ENCODE measurements at regions of chr2 and their contacts with region 1.

Region 1: GRCh38 chr2:16869711-16870110 is 204.1 kb upstream of the CYRIA start:
- DNase-seq: no peak
- H3K4me3 ChIP-seq: no peak overlapping the region
- H3K27ac ChIP-seq: no peak overlapping the region
- H3K4me1 ChIP-seq: no peaks in the 10 kb centered on the region
- CTCF ChIP-seq: no peak

Region 2: DNA sequence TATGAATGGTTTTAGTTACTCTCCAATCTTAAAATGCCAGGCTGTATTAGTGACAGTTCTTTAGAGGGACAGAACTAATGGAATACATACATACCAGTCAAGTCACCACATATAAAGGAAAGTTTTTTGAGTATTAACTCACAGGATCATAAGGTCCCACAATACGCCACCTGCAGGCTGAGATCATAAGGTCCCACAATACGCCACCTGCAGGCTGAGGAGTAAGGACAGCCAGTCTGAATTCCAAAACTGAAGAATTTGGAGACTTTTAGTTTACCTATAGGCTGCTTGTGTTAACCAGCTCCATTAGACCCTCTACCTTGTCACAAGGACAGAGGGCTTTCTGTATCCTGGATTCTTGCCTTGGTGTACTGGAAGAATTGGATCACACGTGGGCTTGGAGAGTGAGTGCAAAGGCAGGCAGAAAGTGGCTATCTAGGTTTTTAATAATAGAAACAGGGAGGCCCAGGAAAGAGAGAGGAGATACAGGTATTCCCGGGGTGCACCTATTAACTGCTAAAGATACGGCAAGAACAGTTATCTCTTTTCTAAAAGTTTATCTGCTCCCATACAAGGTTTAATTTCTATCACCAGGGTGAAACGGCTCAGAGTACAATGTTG is 30.8 kb after region 1 on chr2:
- CTCF ChIA-PET with region 1: no interaction called
- POLR2A ChIA-PET with region 1: no interaction called
- intact Hi-C with region 1: loop called (anchors 1 kb)
- DNase-seq: peak; percentile 57
- H3K4me3 ChIP-seq: no peak overlapping the region
- H3K27ac ChIP-seq: no peak overlapping the region
- H3K4me1 ChIP-seq: no peaks in the 10 kb centered on the region
- CTCF ChIP-seq: peak; percentile 99

Measured in OCI-LY7 (cell line).